CD4-positive, alpha-beta memory T cell (primary cell): ENCODE measurements at regions of chr10 and their contacts with region 1.

Region 1: GRCh38 chr10:93376372-93377293 is 105.5 kb downstream of the MYOF start:
- DNase-seq: peak; percentile 62 to 75 (median 69)
- H3K4me3 ChIP-seq: no peak overlapping the region
- H3K4me3 Mint-ChIP-seq: no peak overlapping the region
- H3K27ac ChIP-seq: no peak overlapping the region
- H3K27ac Mint-ChIP-seq: peak overlapping the region in 1 of 7 donors; percentile 38
- H3K4me1 ChIP-seq: peaks cover 11% of the 10 kb centered on the region
- H3K4me1 Mint-ChIP-seq: peaks cover 9 to 18% (median 9%) of the 10 kb centered on the region in 4 donors
- H3K27me3 ChIP-seq: no peaks in the 10 kb centered on the region
- H3K27me3 Mint-ChIP-seq: peaks cover 0 to 1% of the 10 kb centered on the region in 2 donors

Region 2: GRCh38 chr10:93313798-93314197 is 62.8 kb before region 1 on chr10:
- CTCF ChIA-PET with region 1: no interaction called
- POLR2A ChIA-PET with region 1: no interaction called
- intact Hi-C with region 1: no loop called
- DNase-seq: no peak
- H3K4me3 ChIP-seq: no peak overlapping the region
- H3K4me3 Mint-ChIP-seq: no peak overlapping the region
- H3K27ac ChIP-seq: no peak overlapping the region
- H3K27ac Mint-ChIP-seq: no peak overlapping the region
- H3K4me1 ChIP-seq: no peaks in the 10 kb centered on the region
- H3K4me1 Mint-ChIP-seq: no peaks in the 10 kb centered on the region
- H3K27me3 ChIP-seq: no peaks in the 10 kb centered on the region
- H3K27me3 Mint-ChIP-seq: peaks cover 2 to 4% of the 10 kb centered on the region in 2 donors

Region 3: DNA sequence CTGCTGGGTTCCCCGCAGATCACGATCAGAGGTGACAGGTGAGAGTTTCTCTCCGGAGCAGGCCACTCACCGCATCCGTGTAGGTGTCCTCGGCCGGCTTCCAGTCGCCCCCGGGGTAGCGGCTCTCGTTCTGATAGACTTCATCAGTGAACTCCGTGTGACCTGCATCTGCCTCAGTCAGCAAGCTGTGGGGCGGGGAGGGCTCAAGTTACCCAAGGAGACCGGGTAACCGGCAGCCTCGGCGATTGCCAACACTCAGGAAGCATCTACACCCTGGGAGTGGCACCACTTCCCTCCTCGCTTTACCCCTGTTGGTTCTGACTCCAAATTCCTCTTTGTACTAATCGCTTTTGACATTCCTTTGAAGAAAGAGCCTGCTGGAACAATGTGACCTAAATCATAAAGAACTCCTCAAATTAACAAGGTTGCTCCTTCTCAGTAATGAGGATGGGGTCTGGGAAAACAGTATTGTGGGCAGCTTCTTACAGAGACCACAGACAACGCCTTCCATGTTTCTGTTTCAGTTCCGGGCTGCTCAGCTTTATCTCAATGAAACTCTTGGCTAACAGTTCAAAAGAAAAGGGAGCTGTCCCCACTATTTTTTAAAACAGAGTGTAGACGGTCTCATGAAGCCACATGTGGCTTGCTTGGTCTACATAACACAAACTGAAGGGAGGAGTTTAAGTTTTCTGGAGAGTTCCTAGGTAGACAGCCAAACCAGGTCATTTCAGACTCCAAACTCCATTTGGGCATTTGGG is 12.6 kb before region 1 on chr10:
- CTCF ChIA-PET with region 1: interaction called, 29 read pairs
- POLR2A ChIA-PET with region 1: no interaction called
- intact Hi-C with region 1: no loop called
- DNase-seq: no peak
- H3K4me3 ChIP-seq: no peak overlapping the region
- H3K4me3 Mint-ChIP-seq: no peak overlapping the region
- H3K27ac ChIP-seq: no peak overlapping the region
- H3K27ac Mint-ChIP-seq: peak overlapping the region in 1 of 7 donors; percentile 20
- H3K4me1 ChIP-seq: no peaks in the 10 kb centered on the region
- H3K4me1 Mint-ChIP-seq: peaks cover 2 to 6% (median 3%) of the 10 kb centered on the region in 4 donors
- H3K27me3 ChIP-seq: no peaks in the 10 kb centered on the region
- H3K27me3 Mint-ChIP-seq: peaks cover 0 to 2% of the 10 kb centered on the region in 2 donors

Region 4: GRCh38 chr10:93413252-93413689 is 36.6 kb after region 1 on chr10:
- CTCF ChIA-PET with region 1: interaction called, 70 read pairs
- POLR2A ChIA-PET with region 1: interaction called, 5 read pairs
- intact Hi-C with region 1: loop called (anchors 1 kb)
- DNase-seq: peak; percentile 53 to 66 (median 64)
- H3K4me3 ChIP-seq: peak overlapping the region in 1 of 2 donors; percentile 33
- H3K4me3 Mint-ChIP-seq: peak overlapping the region; percentile 5 to 88 (median 67)
- H3K27ac ChIP-seq: peak overlapping the region; percentile 48
- H3K27ac Mint-ChIP-seq: peak overlapping the region; percentile 79 to 98 (median 94)
- H3K4me1 ChIP-seq: peaks cover 60% of the 10 kb centered on the region
- H3K4me1 Mint-ChIP-seq: peaks cover 47 to 83% (median 70%) of the 10 kb centered on the region in 4 donors
- H3K27me3 ChIP-seq: no peaks in the 10 kb centered on the region
- H3K27me3 Mint-ChIP-seq: no peaks in the 10 kb centered on the region

Region 5: DNA sequence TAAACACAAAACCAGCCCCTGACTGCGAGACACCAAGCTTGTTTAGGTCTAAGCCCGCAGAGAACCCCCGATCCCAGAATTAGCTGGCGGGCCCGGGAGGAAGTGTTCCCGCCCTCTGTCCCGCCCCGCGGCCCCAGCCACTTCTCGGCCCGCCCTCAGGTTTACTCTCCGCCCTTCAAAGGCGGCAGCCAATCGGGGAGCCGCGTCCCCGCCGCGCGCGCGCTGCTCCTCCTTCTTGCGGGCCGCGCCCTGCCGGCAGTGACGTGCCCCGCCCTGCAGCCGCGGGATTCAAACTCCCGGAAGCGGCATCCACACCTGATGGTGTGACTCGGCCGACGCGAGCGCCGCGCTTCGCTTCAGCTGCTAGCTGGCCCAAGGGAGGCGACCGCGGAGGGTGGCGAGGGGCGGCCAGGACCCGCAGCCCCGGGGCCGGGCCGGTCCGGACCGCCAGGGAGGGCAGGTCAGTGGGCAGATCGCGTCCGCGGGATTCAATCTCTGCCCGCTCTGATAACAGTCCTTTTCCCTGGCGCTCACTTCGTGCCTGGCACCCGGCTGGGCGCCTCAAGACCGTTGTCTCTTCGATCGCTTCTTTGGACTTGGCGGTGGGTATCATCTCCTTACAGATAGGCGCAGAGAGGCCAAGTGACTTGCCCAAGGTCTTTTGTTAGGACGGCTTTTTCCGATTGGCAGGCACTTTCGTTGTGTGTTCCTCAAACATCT is 119.8 kb after region 1 on chr10 and contains the start of gene CEP55:
- CTCF ChIA-PET with region 1: interaction called, 726 read pairs
- POLR2A ChIA-PET with region 1: no interaction called
- intact Hi-C with region 1: no loop called
- DNase-seq: peak; percentile 93 to 97 (median 94)
- H3K4me3 ChIP-seq: peak within 1 kb of the TSS; percentile 83 to 94
- H3K4me3 Mint-ChIP-seq: peak within 1 kb of the TSS; percentile 92 to 95 (median 93)
- H3K27ac ChIP-seq: peak within 1 kb of the TSS; percentile 37
- H3K27ac Mint-ChIP-seq: peak within 1 kb of the TSS; percentile 54 to 92 (median 89)
- H3K4me1 ChIP-seq: peaks cover 23% of the 10 kb centered on the region
- H3K4me1 Mint-ChIP-seq: peaks cover 13 to 23% (median 19%) of the 10 kb centered on the region in 4 donors
- H3K27me3 ChIP-seq: no peaks in the 10 kb centered on the region
- H3K27me3 Mint-ChIP-seq: no peaks in the 10 kb centered on the region
- total RNA-seq, gene CEP55: 0.17 to 0.30 TPM

Region 6: GRCh38 chr10:93515071-93516005 is 138.7 kb after region 1 on chr10:
- CTCF ChIA-PET with region 1: interaction called, 210 read pairs
- POLR2A ChIA-PET with region 1: no interaction called
- intact Hi-C with region 1: loop called (anchors 1 kb)
- DNase-seq: no peak
- H3K4me3 ChIP-seq: no peak overlapping the region
- H3K4me3 Mint-ChIP-seq: no peak overlapping the region
- H3K27ac ChIP-seq: no peak overlapping the region
- H3K27ac Mint-ChIP-seq: no peak overlapping the region
- H3K4me1 ChIP-seq: no peaks in the 10 kb centered on the region
- H3K4me1 Mint-ChIP-seq: peaks cover 0 to 4% (median 3%) of the 10 kb centered on the region in 4 donors
- H3K27me3 ChIP-seq: no peaks in the 10 kb centered on the region
- H3K27me3 Mint-ChIP-seq: no peaks in the 10 kb centered on the region

Region 7: DNA sequence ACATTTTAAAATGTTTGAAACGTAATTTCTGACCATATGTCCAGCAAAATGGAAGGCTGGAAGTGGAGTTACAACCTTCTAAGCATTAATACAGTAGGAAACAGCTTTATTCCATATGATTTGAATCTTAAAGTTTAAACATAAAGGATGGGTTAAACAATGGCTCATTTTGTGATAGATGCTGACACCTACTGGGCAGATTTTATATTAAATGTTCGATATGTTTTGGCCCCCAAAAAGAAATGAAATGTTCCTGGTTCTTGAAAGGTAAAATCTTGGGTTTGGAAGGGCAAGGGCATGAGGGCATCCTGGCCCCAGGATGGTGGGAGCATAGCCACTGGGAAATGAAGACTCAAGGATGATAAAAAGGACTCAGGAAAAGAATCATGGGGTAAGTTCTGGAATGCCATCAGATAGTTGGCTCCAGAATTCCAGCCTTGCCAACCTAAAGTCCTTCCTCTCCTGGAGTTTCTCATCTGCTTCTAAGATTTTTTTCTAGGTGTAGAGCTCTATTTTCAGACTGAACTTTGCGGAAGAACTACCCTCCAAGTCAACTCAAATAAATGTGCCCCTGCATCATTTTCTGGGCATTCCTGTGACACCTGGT is 482.5 kb after region 1 on chr10:
- CTCF ChIA-PET with region 1: interaction called, 4 read pairs
- POLR2A ChIA-PET with region 1: no interaction called
- intact Hi-C with region 1: loop called (anchors 10 kb)
- DNase-seq: peak in 2 of 5 donors; percentile 3
- H3K4me3 ChIP-seq: no peak overlapping the region
- H3K4me3 Mint-ChIP-seq: no peak overlapping the region
- H3K27ac ChIP-seq: no peak overlapping the region
- H3K27ac Mint-ChIP-seq: peak overlapping the region in 1 of 7 donors; percentile 42
- H3K4me1 ChIP-seq: no peaks in the 10 kb centered on the region
- H3K4me1 Mint-ChIP-seq: no peaks in the 10 kb centered on the region
- H3K27me3 ChIP-seq: no peaks in the 10 kb centered on the region
- H3K27me3 Mint-ChIP-seq: peaks cover 0 to 4% of the 10 kb centered on the region in 2 donors